Psoas muscle (tissue), 8 donors: ENCODE measurements at regions of chr20 and their contacts with region 1.

Region 1: DNA sequence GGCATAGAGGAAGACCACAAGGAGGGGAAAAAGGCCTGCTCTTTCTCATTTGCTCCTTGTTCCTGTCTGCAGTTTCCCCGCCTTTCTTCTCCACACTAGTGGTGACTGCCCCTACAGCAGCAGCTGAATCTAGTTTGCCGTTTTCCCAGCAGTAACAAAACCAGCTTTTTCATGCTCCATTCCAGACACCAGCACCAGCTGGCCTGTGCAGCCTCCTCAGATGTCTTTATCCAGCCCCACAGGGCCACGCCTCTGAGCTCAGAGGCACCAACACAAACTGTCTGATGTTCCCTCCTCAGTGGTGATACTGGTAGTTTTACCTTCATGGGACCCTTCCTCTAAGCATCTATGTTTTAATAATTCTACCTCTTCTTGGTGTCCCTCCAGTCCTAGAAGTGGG is 70.4 kb upstream of the SLC24A3 start:
- DNase-seq: no peak
- ATAC-seq: no peak
- H3K4me3 ChIP-seq: no peak overlapping the region
- H3K27ac ChIP-seq: no peak overlapping the region
- H3K4me1 ChIP-seq: no peaks in the 10 kb centered on the region
- H3K27me3 ChIP-seq: no peaks in the 10 kb centered on the region
- CTCF ChIP-seq: no peak

Region 2: GRCh38 chr20:20875716-20876115 is 1733.7 kb after region 1 on chr20:
- intact Hi-C with region 1: loop called in 1 of 2 experiments (anchors 5 kb)
- DNase-seq: no peak
- ATAC-seq: no peak
- H3K4me3 ChIP-seq: no peak overlapping the region
- H3K27ac ChIP-seq: no peak overlapping the region
- H3K4me1 ChIP-seq: no peaks in the 10 kb centered on the region
- H3K27me3 ChIP-seq: peaks cover 2 to 12% (median 5%) of the 10 kb centered on the region in 3 donors
- CTCF ChIP-seq: no peak